RWPE1 (cell line): ENCODE measurements at regions of chr19 and their contacts with region 1.

Region 1: DNA sequence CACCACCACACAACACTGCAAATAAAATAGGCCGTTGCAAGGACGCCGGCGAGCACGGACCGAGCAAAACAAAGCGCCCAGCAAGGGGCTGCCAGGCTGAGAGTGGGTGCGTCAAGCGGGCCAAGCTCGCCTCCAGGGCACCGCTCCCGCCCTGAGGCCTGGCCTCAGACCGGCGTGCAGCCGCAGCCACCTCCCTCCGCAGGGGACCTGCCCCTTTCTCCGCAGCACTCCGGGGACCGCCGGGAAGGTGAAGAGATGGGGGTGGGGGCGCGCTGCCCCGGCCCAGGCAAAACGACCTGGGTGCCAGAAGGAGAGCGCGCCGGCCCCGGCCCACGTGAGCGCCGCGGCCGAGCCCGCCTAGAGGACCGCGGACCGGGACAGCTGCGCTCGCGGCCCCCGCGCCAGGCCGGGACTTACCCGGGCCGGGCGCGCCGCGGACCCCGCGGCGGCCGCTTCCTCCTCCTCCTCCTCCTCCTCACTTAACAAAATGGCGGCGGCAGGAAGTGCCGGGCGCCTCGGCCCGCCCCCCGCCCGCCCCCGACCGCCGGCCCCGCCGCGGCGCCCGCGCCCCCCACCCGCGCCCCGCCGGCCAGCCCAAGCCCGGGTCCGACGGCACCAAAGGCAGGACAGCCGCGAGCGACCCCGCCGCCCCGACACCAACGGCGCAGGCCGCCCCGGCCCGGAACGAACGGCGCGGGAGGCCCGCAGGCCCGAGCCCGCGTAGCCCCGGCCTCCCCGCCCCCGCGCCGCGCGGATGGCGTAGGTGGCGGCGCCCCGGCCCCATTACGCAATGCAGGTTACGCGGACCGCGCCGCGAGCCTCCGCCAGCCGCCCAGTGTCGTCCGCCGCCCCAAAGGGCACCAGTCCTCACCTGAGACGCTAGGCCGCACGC is 674 bp downstream of the BRD4 start:
- DNase-seq: peak; percentile 78
- H3K27ac ChIP-seq: peak overlapping the region; percentile 97
- CTCF ChIP-seq: no peak

Region 2: GRCh38 chr19:15238471-15239051 is 93.1 kb before region 1 on chr19:
- CTCF ChIA-PET with region 1: no interaction called
- POLR2A ChIA-PET with region 1: no interaction called
- DNase-seq: no peak
- H3K27ac ChIP-seq: peak overlapping the region; percentile 18
- CTCF ChIP-seq: no peak

Region 3: DNA sequence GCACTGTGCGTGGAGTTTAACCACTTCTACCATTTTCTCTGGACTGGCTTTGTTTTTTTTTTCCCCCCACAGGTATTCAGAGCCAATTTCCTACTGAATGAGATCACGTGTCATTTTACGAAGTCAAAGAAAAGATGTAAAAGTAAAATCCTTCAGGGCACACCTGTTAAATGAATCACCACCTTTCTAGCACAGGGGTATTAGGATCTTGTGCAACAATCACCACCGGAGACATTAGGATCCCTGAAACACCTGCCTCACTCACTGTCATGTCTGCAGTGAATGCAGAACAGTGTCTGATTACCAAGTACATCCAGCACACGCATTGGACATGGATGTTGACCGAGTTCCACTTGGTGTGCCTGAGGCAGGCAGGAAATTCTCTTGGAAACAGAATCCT is 16.6 kb before region 1 on chr19:
- CTCF ChIA-PET with region 1: no interaction called
- POLR2A ChIA-PET with region 1: interaction called, 10 read pairs
- DNase-seq: peak; percentile 86
- H3K27ac ChIP-seq: peak overlapping the region; percentile 63
- CTCF ChIP-seq: no peak